Vagina (tissue), 2 donors: ENCODE measurements at regions of chr9 and their contacts with region 1.

Region 1: DNA sequence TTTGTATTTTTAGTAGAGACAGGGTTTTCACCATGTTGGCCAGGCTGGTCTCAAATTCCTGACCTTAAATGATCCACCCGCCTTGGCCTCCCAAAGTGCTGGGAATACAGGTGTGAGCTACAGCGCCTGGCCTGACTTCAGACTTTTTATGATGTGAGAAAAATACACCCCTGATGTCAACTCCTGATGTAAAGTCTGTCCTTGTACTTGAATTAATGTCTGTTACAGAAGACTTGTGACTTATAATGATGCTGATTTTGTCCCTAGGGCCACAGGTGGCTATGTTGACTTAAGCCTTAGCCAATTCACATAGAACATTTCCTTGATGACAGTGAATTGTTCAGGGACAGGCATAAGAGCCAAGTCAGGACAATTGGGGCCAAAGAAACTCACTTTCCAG is 42.5 kb upstream of the MELK start:
- DNase-seq: no peak
- H3K4me3 ChIP-seq: no peak overlapping the region
- H3K27ac ChIP-seq: no peak overlapping the region
- H3K4me1 ChIP-seq: no peaks in the 10 kb centered on the region
- H3K27me3 ChIP-seq: no peaks in the 10 kb centered on the region
- CTCF ChIP-seq: no peak
- POLR2A ChIP-seq: no peak

Region 2: GRCh38 chr9:36064448-36065037 is 465.7 kb before region 1 on chr9:
- intact Hi-C with region 1: loop called (anchors 5 kb)
- DNase-seq: no peak
- H3K4me3 ChIP-seq: no peak overlapping the region
- H3K27ac ChIP-seq: no peak overlapping the region
- H3K4me1 ChIP-seq: no peaks in the 10 kb centered on the region
- H3K27me3 ChIP-seq: no peaks in the 10 kb centered on the region
- CTCF ChIP-seq: no peak
- POLR2A ChIP-seq: no peak

Region 3: GRCh38 chr9:36364577-36364976 is 165.6 kb before region 1 on chr9:
- intact Hi-C with region 1: no loop called
- DNase-seq: no peak
- H3K4me3 ChIP-seq: no peak overlapping the region
- H3K27ac ChIP-seq: no peak overlapping the region
- H3K4me1 ChIP-seq: no peaks in the 10 kb centered on the region
- H3K27me3 ChIP-seq: no peaks in the 10 kb centered on the region
- CTCF ChIP-seq: no peak
- POLR2A ChIP-seq: no peak